Transverse colon (tissue), 4 donors: ENCODE measurements at regions of chr1 and their contacts with region 1.

Region 1: GRCh38 chr1:72997624-72998023 is 715.3 kb upstream of the NEGR1 start:
- DNase-seq: no peak
- H3K4me3 ChIP-seq: no peak overlapping the region
- H3K27ac ChIP-seq: no peak overlapping the region
- H3K4me1 ChIP-seq: no peaks in the 10 kb centered on the region
- H3K27me3 ChIP-seq: no peaks in the 10 kb centered on the region
- CTCF ChIP-seq: no peak
- EP300 ChIP-seq: no peak
- POLR2A ChIP-seq: no peak

Region 2: DNA sequence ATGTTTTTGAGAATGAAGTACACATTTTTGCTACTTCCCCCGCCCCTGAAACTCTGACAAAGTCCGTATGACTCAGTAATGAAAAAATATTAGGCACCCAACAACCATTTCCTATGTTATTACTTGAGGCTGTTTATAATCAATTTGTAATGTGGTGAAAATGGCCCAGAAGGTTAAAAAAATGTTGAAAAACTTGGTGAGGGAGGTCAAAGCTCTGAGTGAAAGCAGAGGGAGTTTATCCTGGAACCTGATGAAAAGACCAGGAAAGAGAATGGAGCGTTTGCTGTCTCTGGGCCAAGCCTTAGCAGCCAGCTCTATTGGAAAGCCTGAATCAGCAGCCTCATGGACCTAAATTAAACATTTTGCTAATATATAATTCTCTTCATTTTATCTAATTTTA is 347.6 kb before region 1 on chr1:
- in situ Hi-C with region 1: no loop called
- intact Hi-C with region 1: no loop called
- DNase-seq: no peak
- H3K4me3 ChIP-seq: no peak overlapping the region
- H3K27ac ChIP-seq: no peak overlapping the region
- H3K4me1 ChIP-seq: no peaks in the 10 kb centered on the region
- H3K27me3 ChIP-seq: no peaks in the 10 kb centered on the region
- CTCF ChIP-seq: no peak
- EP300 ChIP-seq: no peak
- POLR2A ChIP-seq: no peak

Region 3: GRCh38 chr1:74005533-74005932 is 1007.9 kb after region 1 on chr1:
- in situ Hi-C with region 1: no loop called
- intact Hi-C with region 1: loop called (anchors 5 kb)
- DNase-seq: no peak
- H3K4me3 ChIP-seq: no peak overlapping the region
- H3K27ac ChIP-seq: no peak overlapping the region
- H3K4me1 ChIP-seq: no peaks in the 10 kb centered on the region
- H3K27me3 ChIP-seq: no peaks in the 10 kb centered on the region
- CTCF ChIP-seq: no peak
- EP300 ChIP-seq: no peak
- POLR2A ChIP-seq: no peak